Activated naive CD4-positive, alpha-beta T cell treated with anti-CD3 and anti-CD28 coated beads for 36 hours (primary cell): ENCODE measurements at regions of chr11 and their contacts with region 1.

Region 1: GRCh38 chr11:77580712-77581337 is 8.9 kb upstream of the AQP11 start:
- DNase-seq: peak; percentile 35
- H3K4me3 Mint-ChIP-seq: no peak overlapping the region
- H3K27ac Mint-ChIP-seq: no peak overlapping the region
- H3K4me1 Mint-ChIP-seq: no peaks in the 10 kb centered on the region
- H3K27me3 Mint-ChIP-seq: no peaks in the 10 kb centered on the region

Region 2: DNA sequence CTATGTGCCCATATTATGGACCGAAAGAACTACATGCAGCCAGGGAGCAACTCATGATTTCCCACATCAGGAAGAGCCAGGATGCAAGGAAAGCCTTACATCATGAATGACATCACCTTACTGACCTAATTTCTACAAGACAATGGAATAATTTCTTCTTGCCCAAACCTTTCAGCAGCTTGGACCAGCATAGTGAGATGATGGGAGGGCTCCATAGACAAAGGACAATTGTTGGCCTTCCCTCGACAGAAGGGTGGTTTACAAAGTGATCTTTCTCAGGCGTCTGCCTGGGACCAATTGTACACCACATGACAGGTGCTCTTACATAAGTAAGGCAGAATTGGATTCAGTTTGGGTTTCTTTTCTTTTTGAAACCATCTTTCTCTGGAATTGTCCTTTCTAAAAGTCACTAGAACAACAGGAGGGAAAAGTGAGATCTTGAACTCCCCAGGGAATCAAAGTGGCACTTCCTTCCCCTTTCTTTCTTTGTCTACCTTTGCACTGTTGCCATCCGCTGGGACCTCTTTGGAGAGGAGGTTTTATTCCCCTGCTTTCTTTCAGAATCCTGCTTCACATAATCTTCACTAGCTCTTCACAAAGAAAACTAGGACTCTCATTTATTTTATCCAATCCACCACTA is 55.3 kb before region 1 on chr11:
- CTCF ChIA-PET with region 1: no interaction called
- intact Hi-C with region 1: loop called (anchors 2 kb)
- DNase-seq: no peak
- H3K4me3 Mint-ChIP-seq: no peak overlapping the region
- H3K27ac Mint-ChIP-seq: no peak overlapping the region
- H3K4me1 Mint-ChIP-seq: no peaks in the 10 kb centered on the region
- H3K27me3 Mint-ChIP-seq: no peaks in the 10 kb centered on the region

Region 3: GRCh38 chr11:77542296-77542695 is 38.5 kb before region 1 on chr11:
- CTCF ChIA-PET with region 1: no interaction called
- intact Hi-C with region 1: no loop called
- DNase-seq: no peak
- H3K4me3 Mint-ChIP-seq: no peak overlapping the region
- H3K27ac Mint-ChIP-seq: no peak overlapping the region
- H3K4me1 Mint-ChIP-seq: no peaks in the 10 kb centered on the region
- H3K27me3 Mint-ChIP-seq: no peaks in the 10 kb centered on the region

Region 4: DNA sequence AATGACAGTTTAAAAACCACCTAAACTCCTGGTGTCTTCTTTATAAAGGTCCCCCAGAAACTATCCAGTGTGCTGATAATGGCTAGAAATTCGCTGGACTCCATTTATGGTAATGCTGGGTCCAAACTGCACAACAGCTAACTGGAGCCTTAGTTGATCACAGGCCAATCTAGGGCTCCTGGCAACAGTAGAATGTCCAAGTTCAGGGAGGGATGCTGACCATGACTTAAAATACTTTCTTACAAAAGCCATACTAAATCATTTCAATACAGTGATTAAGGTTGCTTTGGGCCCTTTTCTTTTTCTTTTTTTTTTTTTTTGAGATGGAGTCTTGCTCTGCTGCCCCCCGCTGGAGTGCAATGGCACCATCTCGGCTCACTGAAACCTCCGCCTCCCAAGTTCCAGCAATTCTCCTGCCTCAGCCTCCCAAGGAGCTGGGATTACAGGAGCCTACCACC is 851.3 kb after region 1 on chr11:
- CTCF ChIA-PET with region 1: no interaction called
- intact Hi-C with region 1: no loop called
- DNase-seq: peak; percentile 13
- H3K4me3 Mint-ChIP-seq: no peak overlapping the region
- H3K27ac Mint-ChIP-seq: no peak overlapping the region
- H3K4me1 Mint-ChIP-seq: peaks cover 11% of the 10 kb centered on the region
- H3K27me3 Mint-ChIP-seq: no peaks in the 10 kb centered on the region